Colonic mucosa (tissue), 4 donors: ENCODE measurements at regions of chr7 and their contacts with region 1.

Region 1: GRCh38 chr7:7681179-7681935 is 37.0 kb downstream of the RPA3 start:
- DNase-seq: peak; percentile 69
- H3K4me3 ChIP-seq: no peak overlapping the region
- H3K27ac ChIP-seq: no peak overlapping the region
- H3K4me1 ChIP-seq: peaks cover 4% of the 10 kb centered on the region
- H3K27me3 ChIP-seq: no peaks in the 10 kb centered on the region
- CTCF ChIP-seq: peak; percentile 53

Region 2: GRCh38 chr7:7761340-7761980 is 80.1 kb after region 1 on chr7:
- intact Hi-C with region 1: loop called (anchors 5 kb)
- DNase-seq: no peak
- H3K4me3 ChIP-seq: peak overlapping the region; percentile 32
- H3K27ac ChIP-seq: peak overlapping the region; percentile 60
- H3K4me1 ChIP-seq: no peaks in the 10 kb centered on the region
- H3K27me3 ChIP-seq: no peaks in the 10 kb centered on the region
- CTCF ChIP-seq: no peak

Region 3: DNA sequence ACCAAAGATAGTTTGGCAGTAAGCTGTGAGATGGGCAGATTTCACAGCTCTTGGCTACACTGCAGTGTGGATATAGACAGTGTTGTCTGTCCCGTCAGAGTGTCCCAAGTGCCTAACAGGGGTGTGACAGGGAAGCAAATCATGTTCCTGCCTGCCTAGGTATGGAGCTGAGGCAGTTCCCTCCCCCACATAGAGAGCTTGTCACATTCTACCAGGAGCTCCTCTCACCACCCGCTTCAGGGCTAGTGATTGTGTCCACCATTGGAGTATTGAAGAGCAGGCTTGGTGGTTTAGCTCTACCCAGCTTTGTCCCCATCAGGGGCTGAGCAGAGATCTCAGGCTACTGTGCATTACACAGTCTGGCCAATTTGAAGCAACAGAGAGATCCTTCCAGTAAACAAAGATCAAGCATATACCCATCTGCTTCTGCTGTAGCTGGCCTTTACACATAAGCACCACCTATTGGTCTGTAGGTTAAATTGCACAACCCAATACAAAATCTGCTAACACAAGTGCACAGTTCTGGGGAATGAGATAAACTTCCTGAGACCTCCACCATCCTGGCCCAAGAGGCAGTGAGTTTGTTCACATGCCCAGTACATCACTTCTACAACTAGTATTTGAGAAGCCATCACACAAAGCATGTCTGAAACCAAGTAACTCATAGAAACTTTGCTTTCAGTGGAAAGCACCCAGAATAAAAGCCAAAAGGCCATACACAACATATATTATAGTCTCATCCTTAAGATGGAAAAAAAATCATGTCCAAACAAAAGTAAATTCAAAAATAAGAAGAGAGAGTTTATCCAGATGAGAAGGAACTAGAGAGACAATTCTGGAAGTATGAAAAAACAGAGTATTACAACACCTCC is 354.5 kb after region 1 on chr7:
- intact Hi-C with region 1: loop called (anchors 5 kb)
- DNase-seq: no peak
- H3K4me3 ChIP-seq: no peak overlapping the region
- H3K27ac ChIP-seq: no peak overlapping the region
- H3K4me1 ChIP-seq: no peaks in the 10 kb centered on the region
- H3K27me3 ChIP-seq: no peaks in the 10 kb centered on the region
- CTCF ChIP-seq: peak; percentile 42